Right cardiac atrium (tissue), 5 donors: ENCODE measurements at regions of chr2 and their contacts with region 1.

Region 1: GRCh38 chr2:119856469-119856912 is 96.8 kb downstream of the PTPN4 start:
- DNase-seq: no peak
- ATAC-seq: no peak
- H3K4me3 ChIP-seq: no peak overlapping the region
- H3K27ac ChIP-seq: no peak overlapping the region
- H3K4me1 ChIP-seq: peaks cover 2% of the 10 kb centered on the region
- H3K27me3 ChIP-seq: no peaks in the 10 kb centered on the region

Region 2: DNA sequence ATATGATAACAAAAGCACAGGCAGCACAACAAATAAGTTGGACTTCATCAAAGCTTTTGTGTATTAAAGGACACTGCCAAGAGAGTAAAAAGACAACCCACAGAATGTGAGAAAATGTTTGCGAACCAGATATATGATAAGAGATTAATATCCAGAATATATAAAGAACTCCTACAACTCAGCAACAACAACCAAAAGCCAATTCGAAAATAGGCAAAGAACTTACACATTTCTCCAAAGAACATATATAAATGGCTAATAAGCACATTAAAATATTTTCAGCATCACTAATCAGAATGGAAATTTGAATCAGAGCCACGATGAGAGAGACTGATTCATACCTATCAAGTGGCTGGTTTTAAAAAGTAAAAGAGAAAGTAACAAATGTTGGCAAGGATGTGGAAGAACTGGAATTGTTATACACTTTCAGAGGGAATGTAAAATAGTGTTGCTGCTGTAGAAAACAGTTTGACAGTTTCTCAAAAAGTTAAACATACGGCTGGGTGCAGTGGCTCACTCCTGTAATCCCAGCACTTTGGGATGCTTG is 181.6 kb after region 1 on chr2:
- intact Hi-C with region 1: loop called in 1 of 4 experiments (anchors 10 kb)
- DNase-seq: no peak
- ATAC-seq: no peak
- H3K4me3 ChIP-seq: no peak overlapping the region
- H3K27ac ChIP-seq: no peak overlapping the region
- H3K4me1 ChIP-seq: peaks cover 2% of the 10 kb centered on the region
- H3K27me3 ChIP-seq: no peaks in the 10 kb centered on the region